ENCODE measurements at regions of chr1 and their contacts with region 1.

Region 1: GRCh38 chr1:98048244-98048643 is 127.4 kb upstream of the DPYD start:
- DNase-seq: peak; percentile 89
- H3K4me3 Mint-ChIP-seq: peak overlapping the region; percentile 54
- H3K27ac Mint-ChIP-seq: no peak overlapping the region
- H3K4me1 Mint-ChIP-seq: peaks cover 38% of the 10 kb centered on the region
- H3K27me3 Mint-ChIP-seq: peaks cover 62% of the 10 kb centered on the region

Region 2: GRCh38 chr1:98001764-98002163 is 46.5 kb before region 1 on chr1:
- CTCF ChIA-PET with region 1: no interaction called
- intact Hi-C with region 1: loop called (anchors 2 kb)
- DNase-seq: no peak
- H3K4me3 Mint-ChIP-seq: no peak overlapping the region
- H3K27ac Mint-ChIP-seq: no peak overlapping the region
- H3K4me1 Mint-ChIP-seq: no peaks in the 10 kb centered on the region
- H3K27me3 Mint-ChIP-seq: no peaks in the 10 kb centered on the region

Region 3: DNA sequence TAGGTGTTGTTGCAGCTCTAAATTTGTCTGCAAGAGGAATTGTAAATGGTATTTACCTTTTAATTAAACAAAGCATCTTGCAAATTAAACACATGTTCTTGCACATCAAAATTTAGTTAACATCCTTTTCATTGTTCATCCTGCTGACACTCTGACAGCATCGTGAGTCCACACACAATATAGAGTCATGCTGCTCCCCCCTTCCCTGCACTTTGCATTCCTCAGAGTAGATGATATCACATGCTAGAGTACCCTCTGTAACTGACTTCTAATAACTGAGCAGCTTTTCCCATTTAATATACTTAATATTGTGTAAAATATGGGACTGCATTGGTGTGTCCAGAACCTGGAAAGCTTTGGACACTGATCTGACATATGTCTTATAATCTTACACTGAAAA is 11.4 kb after region 1 on chr1:
- CTCF ChIA-PET with region 1: no interaction called
- intact Hi-C with region 1: no loop called
- DNase-seq: no peak
- H3K4me3 Mint-ChIP-seq: no peak overlapping the region
- H3K27ac Mint-ChIP-seq: no peak overlapping the region
- H3K4me1 Mint-ChIP-seq: no peaks in the 10 kb centered on the region
- H3K27me3 Mint-ChIP-seq: peaks cover 38% of the 10 kb centered on the region

Measured in activated naive CD4-positive, alpha-beta T cell treated with anti-CD3 and anti-CD28 coated beads for 36 hours (primary cell).